Common myeloid progenitor, CD34-positive (primary cell): ENCODE measurements at regions of chr4 and their contacts with region 1.

Region 1: GRCh38 chr4:16067515-16067914 is 16.3 kb downstream of the PROM1 start:
- DNase-seq: peak; percentile 59 to 63 (median 60)
- H3K4me3 ChIP-seq: no peak overlapping the region
- H3K27ac ChIP-seq: peak overlapping the region; percentile 19 to 25
- H3K4me1 ChIP-seq: peaks cover 6 to 71% (median 56%) of the 10 kb centered on the region in 4 experiments
- H3K27me3 ChIP-seq: no peaks in the 10 kb centered on the region

Region 2: DNA sequence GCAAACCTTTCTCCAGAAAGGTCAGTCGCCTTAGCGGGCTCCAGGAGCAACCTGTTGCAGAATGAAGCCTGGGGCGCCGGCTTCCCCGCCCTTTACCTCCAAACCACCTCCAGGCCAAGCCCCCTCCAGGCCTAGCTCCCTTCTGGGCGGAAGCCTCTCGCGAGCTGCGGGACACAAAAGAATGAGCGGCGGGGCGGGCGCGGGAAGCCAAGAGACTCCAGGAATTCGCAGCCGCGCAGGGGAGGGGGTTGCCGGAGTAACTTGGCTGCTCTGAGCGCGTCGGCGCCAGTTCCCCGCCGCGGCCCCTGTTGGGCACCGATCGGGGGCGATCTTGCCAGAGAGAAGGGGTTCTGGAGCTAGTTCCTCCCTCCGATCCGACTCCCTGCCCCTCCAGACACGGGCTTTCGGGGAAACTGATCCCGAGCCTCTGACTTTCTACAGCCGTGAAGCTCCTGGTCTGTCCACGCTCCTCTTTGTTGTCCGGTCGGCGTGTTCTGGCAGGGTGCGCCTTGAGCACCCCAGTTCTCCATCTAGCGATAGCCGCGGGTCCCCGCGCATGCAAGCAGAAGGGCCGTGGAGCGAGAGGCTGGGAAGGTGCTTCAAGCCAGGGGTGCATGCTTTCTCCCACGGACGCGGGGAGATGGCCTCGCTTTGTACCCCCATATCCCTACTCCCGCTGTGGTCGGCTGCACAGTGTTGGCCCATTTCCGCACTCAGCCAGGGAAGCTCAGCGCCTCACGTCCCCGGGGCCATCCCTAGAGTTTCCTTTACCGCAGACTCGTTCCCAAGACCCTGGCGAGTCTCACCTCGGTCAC is 15.1 kb after region 1 on chr4:
- CTCF ChIA-PET with region 1: interaction called, 28 read pairs
- POLR2A ChIA-PET with region 1: interaction called, 7 read pairs
- DNase-seq: peak; percentile 35 to 71 (median 59)
- H3K4me3 ChIP-seq: peak overlapping the region; percentile 65 to 99 (median 92)
- H3K27ac ChIP-seq: peak overlapping the region; percentile 66 to 82
- H3K4me1 ChIP-seq: peaks cover 2 to 64% (median 53%) of the 10 kb centered on the region in 4 experiments
- H3K27me3 ChIP-seq: no peaks in the 10 kb centered on the region